Heart left ventricle (tissue), 16 donors: ENCODE measurements at regions of chr11 and their contacts with region 1.

Region 1: DNA sequence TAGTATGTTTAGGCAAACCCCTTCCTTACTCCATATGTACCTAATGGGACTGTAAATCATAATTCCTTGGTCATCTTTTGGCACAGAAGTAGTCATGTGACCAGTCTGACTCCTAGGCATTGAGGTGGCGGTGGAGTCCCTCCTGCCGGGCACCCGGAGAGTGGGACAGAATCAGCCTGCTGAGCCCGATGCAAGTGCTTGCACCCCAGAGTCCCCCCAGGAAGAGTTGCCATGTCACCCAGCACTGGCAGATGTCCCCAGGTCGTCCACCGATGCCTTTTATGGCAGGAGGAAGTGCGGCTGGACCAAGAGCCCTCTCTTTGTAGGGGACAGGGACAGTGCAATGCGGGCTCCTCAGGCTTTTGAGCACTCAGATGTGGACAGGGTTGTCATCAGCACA is 500.3 kb downstream of the NELL1 start:
- DNase-seq: no peak
- ATAC-seq: no peak
- H3K4me3 ChIP-seq: no peak overlapping the region
- H3K27ac ChIP-seq: no peak overlapping the region
- H3K4me1 ChIP-seq: no peaks in the 10 kb centered on the region
- H3K27me3 ChIP-seq: no peaks in the 10 kb centered on the region
- CTCF ChIP-seq: no peak
- POLR2A ChIP-seq: no peak

Region 2: GRCh38 chr11:21105196-21105917 is 64.3 kb before region 1 on chr11:
- intact Hi-C with region 1: no loop called
- DNase-seq: no peak
- ATAC-seq: no peak
- H3K4me3 ChIP-seq: no peak overlapping the region
- H3K27ac ChIP-seq: no peak overlapping the region
- H3K4me1 ChIP-seq: no peaks in the 10 kb centered on the region
- H3K27me3 ChIP-seq: no peaks in the 10 kb centered on the region
- CTCF ChIP-seq: no peak
- POLR2A ChIP-seq: no peak

Region 3: DNA sequence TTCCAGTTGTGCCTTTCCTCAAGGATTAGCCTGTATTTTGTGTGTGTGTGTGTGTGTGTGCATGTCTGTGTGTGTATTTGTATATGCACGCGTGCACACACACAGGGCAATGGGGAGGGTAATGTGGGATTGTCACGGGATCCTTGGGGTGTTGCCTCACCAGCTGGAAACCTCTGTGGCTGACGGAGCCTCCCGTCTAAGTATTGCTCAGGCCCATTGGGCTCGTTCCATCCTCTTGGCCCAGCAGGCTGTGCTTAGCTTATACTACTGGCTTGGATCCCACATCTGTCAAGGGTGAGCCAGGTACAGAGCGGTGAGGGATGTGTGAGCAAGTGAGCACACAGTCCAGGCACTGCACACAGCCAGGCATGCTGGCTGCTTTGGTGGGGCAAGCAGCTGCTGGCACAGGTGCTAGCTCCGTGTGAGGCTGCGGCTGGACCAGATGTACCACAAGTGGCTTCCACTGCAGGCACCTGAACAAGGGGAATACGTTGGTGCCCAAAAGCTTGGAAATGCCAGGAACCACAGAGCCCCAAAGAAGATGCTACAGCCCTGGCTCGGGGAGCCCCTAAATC is 37.4 kb before region 1 on chr11:
- intact Hi-C with region 1: loop called in 1 of 10 experiments (anchors 2 kb)
- DNase-seq: no peak
- ATAC-seq: no peak
- H3K4me3 ChIP-seq: no peak overlapping the region
- H3K27ac ChIP-seq: no peak overlapping the region
- H3K4me1 ChIP-seq: no peaks in the 10 kb centered on the region
- H3K27me3 ChIP-seq: no peaks in the 10 kb centered on the region
- CTCF ChIP-seq: no peak
- POLR2A ChIP-seq: no peak

Region 4: GRCh38 chr11:21195995-21196394 is 26.4 kb after region 1 on chr11:
- intact Hi-C with region 1: no loop called
- DNase-seq: no peak
- ATAC-seq: peak in 3 of 4 donors; percentile 62 to 76 (median 71)
- H3K4me3 ChIP-seq: no peak overlapping the region
- H3K27ac ChIP-seq: no peak overlapping the region
- H3K4me1 ChIP-seq: no peaks in the 10 kb centered on the region
- H3K27me3 ChIP-seq: no peaks in the 10 kb centered on the region
- CTCF ChIP-seq: no peak
- POLR2A ChIP-seq: no peak